Right lobe of liver (tissue), 6 donors: ENCODE measurements at regions of chr13 and their contacts with region 1.

Region 1: GRCh38 chr13:98004111-98004510 is 50.6 kb downstream of the IPO5 start:
- DNase-seq: no peak
- ATAC-seq: peak in 1 of 4 donors; percentile 28
- H3K4me3 ChIP-seq: no peak overlapping the region
- H3K27ac ChIP-seq: no peak overlapping the region
- H3K4me1 ChIP-seq: no peaks in the 10 kb centered on the region
- H3K27me3 ChIP-seq: no peaks in the 10 kb centered on the region
- CTCF ChIP-seq: no peak
- POLR2A ChIP-seq: no peak

Region 2: GRCh38 chr13:97855570-97856303 is 148.4 kb before region 1 on chr13:
- intact Hi-C with region 1: loop called in 1 of 2 experiments (anchors 10 kb)
- DNase-seq: peak in 2 of 3 donors; percentile 26 to 50
- ATAC-seq: peak; percentile 94 to 96 (median 96)
- H3K4me3 ChIP-seq: no peak overlapping the region
- H3K27ac ChIP-seq: no peak overlapping the region
- H3K4me1 ChIP-seq: no peaks in the 10 kb centered on the region
- H3K27me3 ChIP-seq: no peaks in the 10 kb centered on the region
- CTCF ChIP-seq: peak; percentile 70 to 88 (median 86)
- POLR2A ChIP-seq: no peak

Region 3: GRCh38 chr13:97953376-97953970 is 50.6 kb before region 1 on chr13 and contains the start of gene IPO5:
- intact Hi-C with region 1: no loop called
- DNase-seq: no peak
- ATAC-seq: no peak
- H3K4me3 ChIP-seq: no peak within 1 kb of the TSS
- H3K27ac ChIP-seq: no peak within 1 kb of the TSS
- H3K4me1 ChIP-seq: no peaks in the 10 kb centered on the region
- H3K27me3 ChIP-seq: no peaks in the 10 kb centered on the region
- CTCF ChIP-seq: no peak
- POLR2A ChIP-seq: no peak
- total RNA-seq, gene IPO5: 36.0 to 52.3 (median 45.2) TPM

Region 4: DNA sequence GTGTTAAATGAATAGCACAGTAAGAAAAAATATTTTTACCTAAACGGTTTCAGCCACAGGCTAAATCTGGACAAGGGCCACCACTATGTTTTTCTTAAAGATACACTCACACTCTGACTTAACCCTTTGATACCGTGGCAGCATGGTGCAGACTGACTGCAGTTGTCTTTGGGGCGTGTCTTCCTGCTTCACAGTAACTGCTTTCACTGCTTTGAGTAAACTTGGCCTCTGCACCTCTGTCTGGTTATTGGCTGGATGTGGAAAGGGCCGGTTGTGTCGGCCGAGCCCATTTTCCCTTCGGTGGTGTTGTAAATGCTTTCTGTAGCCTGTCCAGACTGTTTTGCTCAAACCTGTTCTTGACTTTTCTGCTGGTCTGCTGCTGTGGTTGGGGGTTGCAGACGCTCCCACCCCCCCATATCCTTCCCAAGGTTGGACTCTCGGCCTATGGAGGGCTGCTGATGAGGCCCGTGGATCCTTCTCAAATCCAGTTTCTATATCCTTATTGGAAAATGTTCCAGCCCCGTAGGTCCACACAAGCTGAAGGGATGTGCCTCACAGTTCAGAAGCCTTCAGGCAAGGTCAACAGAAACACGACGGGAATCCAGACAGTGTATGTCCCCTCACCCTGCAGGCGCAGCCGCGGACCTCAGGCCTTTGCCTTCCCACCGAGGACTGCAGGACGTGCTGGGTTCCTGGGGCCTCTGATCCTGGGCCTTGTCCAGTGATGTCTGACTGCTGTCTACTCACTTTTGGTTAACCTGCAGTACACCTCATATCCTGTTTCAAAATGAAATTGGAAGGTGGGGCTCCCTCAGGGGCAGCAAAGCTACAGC is 263.2 kb after region 1 on chr13:
- intact Hi-C with region 1: no loop called
- DNase-seq: peak; percentile 41 to 86 (median 78)
- ATAC-seq: peak; percentile 76 to 84 (median 82)
- H3K4me3 ChIP-seq: peak overlapping the region in 2 of 3 donors; percentile 31 to 34
- H3K27ac ChIP-seq: peak overlapping the region; percentile 31 to 76 (median 57)
- H3K4me1 ChIP-seq: peaks cover 0 to 38% (median 14%) of the 10 kb centered on the region in 4 donors
- H3K27me3 ChIP-seq: no peaks in the 10 kb centered on the region
- CTCF ChIP-seq: no peak
- POLR2A ChIP-seq: peak; percentile 19